ENCODE measurements at regions of chr6 and their contacts with region 1.

Region 1: GRCh38 chr6:84976526-84977420 is 212.4 kb upstream of the TBX18 start:
- DNase-seq: peak; percentile 71
- H3K4me3 ChIP-seq: no peak overlapping the region
- H3K27ac ChIP-seq: no peak overlapping the region
- H3K4me1 ChIP-seq: peaks cover 32% of the 10 kb centered on the region
- H3K27me3 ChIP-seq: no peaks in the 10 kb centered on the region
- CTCF ChIP-seq: no peak
- POLR2A ChIP-seq: no peak

Region 2: DNA sequence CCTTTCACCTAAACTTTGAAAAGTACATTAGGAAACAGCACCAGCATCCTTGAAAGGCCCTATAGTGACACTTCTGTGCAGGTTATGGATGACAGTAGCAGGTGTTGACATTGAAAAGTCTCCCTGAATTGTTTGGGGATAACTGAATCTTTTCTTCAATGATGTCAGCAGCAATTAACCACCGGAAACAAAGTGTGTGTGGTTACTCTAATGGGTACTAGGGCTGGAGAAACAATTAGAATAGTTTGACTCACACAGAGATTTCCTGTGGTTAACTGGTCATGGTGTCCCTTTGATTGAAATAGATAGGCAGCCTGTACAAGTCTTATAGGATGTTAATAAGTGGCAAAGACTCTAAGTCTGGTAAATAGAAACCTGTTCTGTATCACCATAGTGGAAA is 401.5 kb before region 1 on chr6:
- CTCF ChIA-PET with region 1: no interaction called
- POLR2A ChIA-PET with region 1: no interaction called
- dilution Hi-C with region 1: no loop called
- intact Hi-C with region 1: loop called (anchors 2 kb)
- DNase-seq: peak; percentile 89
- H3K4me3 ChIP-seq: no peak overlapping the region
- H3K27ac ChIP-seq: peak overlapping the region; percentile 91
- H3K4me1 ChIP-seq: peaks cover 17% of the 10 kb centered on the region
- H3K27me3 ChIP-seq: no peaks in the 10 kb centered on the region
- CTCF ChIP-seq: no peak
- POLR2A ChIP-seq: peak; percentile 61

Region 3: GRCh38 chr6:84667252-84668213 is 309.2 kb before region 1 on chr6:
- CTCF ChIA-PET with region 1: no interaction called
- POLR2A ChIA-PET with region 1: no interaction called
- dilution Hi-C with region 1: no loop called
- intact Hi-C with region 1: loop called (anchors 1 kb)
- DNase-seq: peak; percentile 88
- H3K4me3 ChIP-seq: no peak overlapping the region
- H3K27ac ChIP-seq: peak overlapping the region; percentile 89
- H3K4me1 ChIP-seq: peaks cover 17% of the 10 kb centered on the region
- H3K27me3 ChIP-seq: no peaks in the 10 kb centered on the region
- CTCF ChIP-seq: no peak
- POLR2A ChIP-seq: no peak

Region 4: GRCh38 chr6:84798257-84798656 is 178.5 kb before region 1 on chr6:
- CTCF ChIA-PET with region 1: no interaction called
- POLR2A ChIA-PET with region 1: no interaction called
- dilution Hi-C with region 1: no loop called
- intact Hi-C with region 1: loop called (anchors 2 kb)
- DNase-seq: peak; percentile 94
- H3K4me3 ChIP-seq: no peak overlapping the region
- H3K27ac ChIP-seq: no peak overlapping the region
- H3K4me1 ChIP-seq: peaks cover 22% of the 10 kb centered on the region
- H3K27me3 ChIP-seq: no peaks in the 10 kb centered on the region
- CTCF ChIP-seq: no peak
- POLR2A ChIP-seq: no peak

Region 5: GRCh38 chr6:84943905-84944304 is 32.9 kb before region 1 on chr6:
- CTCF ChIA-PET with region 1: no interaction called
- POLR2A ChIA-PET with region 1: no interaction called
- dilution Hi-C with region 1: no loop called
- intact Hi-C with region 1: no loop called
- DNase-seq: no peak
- H3K4me3 ChIP-seq: no peak overlapping the region
- H3K27ac ChIP-seq: no peak overlapping the region
- H3K4me1 ChIP-seq: no peaks in the 10 kb centered on the region
- H3K27me3 ChIP-seq: peaks cover 0 to 4% of the 10 kb centered on the region in 2 experiments
- CTCF ChIP-seq: no peak
- POLR2A ChIP-seq: no peak

Region 6: DNA sequence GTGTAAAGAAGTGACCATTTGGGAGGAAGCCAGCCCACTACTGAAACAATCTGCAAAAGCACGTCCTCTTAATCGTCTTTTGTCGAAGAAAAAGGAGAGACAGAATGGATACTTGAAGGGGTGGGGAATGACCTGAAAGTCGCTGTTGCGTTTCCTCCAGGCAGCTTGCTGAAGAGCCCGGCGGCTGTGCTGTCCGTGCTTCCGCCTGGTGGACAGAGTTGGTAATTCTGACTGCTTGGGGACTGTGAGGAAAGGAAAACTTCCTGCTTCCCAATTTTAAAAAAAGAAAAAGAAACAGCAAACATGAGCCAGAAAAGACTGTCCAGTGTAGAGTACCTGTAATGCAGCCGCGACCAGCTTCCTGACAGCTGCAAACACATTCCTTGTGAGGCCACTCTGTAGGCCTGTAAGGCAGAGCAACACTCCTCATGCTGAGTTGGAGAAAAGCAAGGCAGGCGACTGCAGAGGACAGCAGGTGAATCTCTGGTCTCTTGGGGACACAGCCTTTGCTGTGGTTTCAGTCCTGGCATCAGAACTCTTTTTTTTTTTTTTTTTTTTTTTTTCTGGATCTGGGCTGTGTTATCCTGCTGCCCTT is 38.7 kb after region 1 on chr6:
- CTCF ChIA-PET with region 1: interaction called, 7 read pairs
- POLR2A ChIA-PET with region 1: no interaction called
- dilution Hi-C with region 1: no loop called
- intact Hi-C with region 1: loop called (anchors 2 kb)
- DNase-seq: peak; percentile 83
- H3K4me3 ChIP-seq: no peak overlapping the region
- H3K27ac ChIP-seq: no peak overlapping the region
- H3K4me1 ChIP-seq: no peaks in the 10 kb centered on the region
- H3K27me3 ChIP-seq: peaks cover 9% of the 10 kb centered on the region in 2 experiments
- CTCF ChIP-seq: peak; percentile 80 to 82
- POLR2A ChIP-seq: no peak

Region 7: DNA sequence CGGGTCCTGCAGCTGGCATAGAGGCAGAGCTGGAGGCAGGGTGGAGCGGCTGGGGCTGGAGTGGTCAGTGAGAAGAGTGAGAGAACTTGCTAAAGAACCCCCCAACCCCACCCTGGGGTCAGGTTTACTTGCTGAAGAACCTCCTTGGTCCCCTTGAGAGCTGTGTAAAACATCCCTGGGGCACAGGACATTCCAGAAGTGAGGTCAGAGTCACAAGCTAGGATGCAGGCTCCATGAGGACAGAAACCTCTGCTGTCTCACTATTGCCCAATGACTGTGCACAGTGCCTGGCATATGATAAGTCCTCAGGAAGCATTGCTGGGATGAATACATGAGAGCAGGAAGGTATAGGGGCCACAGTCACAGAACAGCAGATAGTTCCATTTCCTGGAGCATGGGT is 491.5 kb after region 1 on chr6:
- CTCF ChIA-PET with region 1: no interaction called
- POLR2A ChIA-PET with region 1: no interaction called
- dilution Hi-C with region 1: no loop called
- intact Hi-C with region 1: no loop called
- DNase-seq: no peak
- H3K4me3 ChIP-seq: no peak overlapping the region
- H3K27ac ChIP-seq: no peak overlapping the region
- H3K4me1 ChIP-seq: peaks cover 31% of the 10 kb centered on the region
- H3K27me3 ChIP-seq: no peaks in the 10 kb centered on the region
- CTCF ChIP-seq: no peak
- POLR2A ChIP-seq: no peak